CD4-positive, alpha-beta memory T cell (primary cell): ENCODE measurements at regions of chr5 and their contacts with region 1.

Region 1: DNA sequence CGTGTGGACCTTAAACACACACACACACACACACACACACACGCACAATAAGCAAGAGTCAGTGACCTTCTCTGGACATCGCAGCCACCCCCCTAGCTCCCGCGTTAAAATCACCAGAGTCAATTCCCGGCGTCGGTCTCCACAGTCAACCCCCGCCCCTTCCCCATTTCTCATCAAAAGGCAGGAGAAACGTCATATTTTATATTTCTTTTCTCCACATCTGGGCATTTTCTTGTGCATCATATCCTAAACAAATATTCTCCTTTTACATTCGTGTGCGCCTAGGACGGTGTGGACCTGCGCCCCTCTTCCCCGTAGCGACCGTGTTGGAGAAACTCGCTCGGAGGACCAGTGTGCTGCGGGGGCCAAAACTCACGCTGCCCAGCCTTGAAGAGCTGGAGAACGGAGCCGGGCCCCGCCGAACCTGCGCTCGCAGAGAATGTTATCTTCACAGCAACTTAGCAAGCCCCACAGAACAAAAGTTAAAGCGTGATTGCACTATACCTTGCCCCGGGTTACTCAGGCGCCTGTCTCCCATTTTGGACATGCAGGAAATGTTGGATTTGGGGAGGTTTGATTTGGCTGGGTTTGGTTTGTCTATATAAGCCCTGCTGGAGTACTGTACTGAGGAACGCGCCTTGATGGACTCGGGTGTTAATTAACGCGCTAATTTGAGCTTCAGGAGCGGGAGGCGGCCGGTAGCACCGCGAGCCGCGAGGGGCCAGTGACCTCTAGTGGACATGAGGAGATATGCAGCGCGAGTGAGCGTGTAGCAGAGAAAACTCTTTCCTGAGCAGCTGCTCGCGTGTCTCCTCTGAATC is 192.4 kb downstream of the MEF2C start:
- DNase-seq: peak; percentile 54 to 73 (median 69)
- H3K4me3 ChIP-seq: no peak overlapping the region
- H3K4me3 Mint-ChIP-seq: peak overlapping the region; percentile 43 to 87 (median 73)
- H3K27ac ChIP-seq: no peak overlapping the region
- H3K27ac Mint-ChIP-seq: peak overlapping the region in 5 of 7 donors; percentile 40 to 93 (median 77)
- H3K4me1 ChIP-seq: peaks cover 12% of the 10 kb centered on the region
- H3K4me1 Mint-ChIP-seq: peaks cover 6 to 30% (median 10%) of the 10 kb centered on the region in 4 donors
- H3K27me3 ChIP-seq: peaks cover 85% of the 10 kb centered on the region
- H3K27me3 Mint-ChIP-seq: peaks cover 74 to 83% of the 10 kb centered on the region in 2 donors

Region 2: DNA sequence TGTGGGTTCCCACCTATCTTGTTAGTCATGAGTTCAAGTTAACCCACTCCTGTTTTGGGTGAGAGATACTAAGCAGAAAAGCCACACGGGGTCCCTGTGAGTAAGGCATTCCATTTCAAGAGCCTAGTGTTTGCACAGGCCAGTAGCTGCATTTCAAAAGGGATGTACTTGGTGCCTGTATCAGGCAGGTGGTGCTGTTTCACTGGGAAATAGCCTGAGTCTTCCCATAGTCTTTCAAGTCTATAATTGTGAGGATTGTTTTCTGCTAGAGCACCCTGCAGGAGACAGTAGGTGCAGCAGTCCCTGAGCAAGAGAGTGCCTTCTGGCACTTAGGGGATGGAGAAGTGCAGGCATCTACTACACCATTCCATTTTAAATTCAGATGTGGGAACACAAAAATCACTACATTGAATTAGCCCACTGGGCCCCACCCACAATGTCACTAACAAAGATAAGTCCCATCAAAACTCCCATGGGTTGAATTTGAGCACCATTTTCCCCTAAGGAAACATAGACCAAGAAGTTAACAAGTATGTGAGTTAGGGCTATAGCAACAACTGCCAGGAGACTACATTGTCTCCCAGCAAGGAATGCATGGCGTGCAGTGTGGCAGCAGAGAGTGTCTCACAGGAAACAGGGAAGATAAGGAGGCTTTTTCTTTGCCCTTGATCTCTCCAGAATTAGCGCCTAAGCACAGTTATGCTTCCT is 1809.7 kb before region 1 on chr5:
- CTCF ChIA-PET with region 1: interaction called, 6 read pairs
- POLR2A ChIA-PET with region 1: no interaction called
- intact Hi-C with region 1: loop called (anchors 2 kb)
- DNase-seq: peak; percentile 37 to 50 (median 45)
- H3K4me3 ChIP-seq: no peak overlapping the region
- H3K4me3 Mint-ChIP-seq: no peak overlapping the region
- H3K27ac ChIP-seq: no peak overlapping the region
- H3K27ac Mint-ChIP-seq: peak overlapping the region in 1 of 7 donors; percentile 13
- H3K4me1 ChIP-seq: no peaks in the 10 kb centered on the region
- H3K4me1 Mint-ChIP-seq: peaks cover 0 to 1% (median 0%) of the 10 kb centered on the region in 4 donors
- H3K27me3 ChIP-seq: no peaks in the 10 kb centered on the region
- H3K27me3 Mint-ChIP-seq: no peaks in the 10 kb centered on the region

Region 3: GRCh38 chr5:87780831-87781760 is 909.5 kb before region 1 on chr5:
- CTCF ChIA-PET with region 1: interaction called, 133 read pairs
- POLR2A ChIA-PET with region 1: no interaction called
- intact Hi-C with region 1: loop called (anchors 1 kb)
- DNase-seq: peak; percentile 67 to 76 (median 72)
- H3K4me3 ChIP-seq: no peak overlapping the region
- H3K4me3 Mint-ChIP-seq: no peak overlapping the region
- H3K27ac ChIP-seq: no peak overlapping the region
- H3K27ac Mint-ChIP-seq: no peak overlapping the region
- H3K4me1 ChIP-seq: no peaks in the 10 kb centered on the region
- H3K4me1 Mint-ChIP-seq: peaks cover 0 to 2% (median under 1%) of the 10 kb centered on the region in 4 donors
- H3K27me3 ChIP-seq: peaks cover 7% of the 10 kb centered on the region
- H3K27me3 Mint-ChIP-seq: peaks cover 8 to 15% of the 10 kb centered on the region in 2 donors

Region 4: DNA sequence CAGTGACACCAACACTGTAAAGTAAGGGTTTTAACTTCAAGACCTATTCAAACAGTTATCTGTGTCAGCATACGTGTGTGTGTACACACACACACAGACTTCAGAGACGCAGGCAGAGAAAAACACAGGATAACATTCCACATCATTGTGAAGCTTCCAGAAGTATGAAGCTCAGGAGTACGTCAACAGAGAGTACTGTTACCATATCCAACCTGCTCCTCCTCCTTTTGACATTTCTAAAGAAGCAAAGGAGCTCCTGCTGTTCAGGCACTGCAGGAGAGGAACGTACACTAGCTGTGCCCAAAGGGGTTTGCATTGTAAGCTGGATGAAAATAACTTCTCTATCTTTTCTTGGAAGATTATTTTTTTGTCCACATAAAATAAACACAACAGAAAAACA is 11.7 kb after region 1 on chr5:
- CTCF ChIA-PET with region 1: interaction called, 15 read pairs
- POLR2A ChIA-PET with region 1: no interaction called
- intact Hi-C with region 1: no loop called
- DNase-seq: no peak
- H3K4me3 ChIP-seq: no peak overlapping the region
- H3K4me3 Mint-ChIP-seq: no peak overlapping the region
- H3K27ac ChIP-seq: no peak overlapping the region
- H3K27ac Mint-ChIP-seq: no peak overlapping the region
- H3K4me1 ChIP-seq: no peaks in the 10 kb centered on the region
- H3K4me1 Mint-ChIP-seq: no peaks in the 10 kb centered on the region
- H3K27me3 ChIP-seq: peaks cover 3% of the 10 kb centered on the region
- H3K27me3 Mint-ChIP-seq: peaks cover 24 to 31% of the 10 kb centered on the region in 2 donors

Region 5: DNA sequence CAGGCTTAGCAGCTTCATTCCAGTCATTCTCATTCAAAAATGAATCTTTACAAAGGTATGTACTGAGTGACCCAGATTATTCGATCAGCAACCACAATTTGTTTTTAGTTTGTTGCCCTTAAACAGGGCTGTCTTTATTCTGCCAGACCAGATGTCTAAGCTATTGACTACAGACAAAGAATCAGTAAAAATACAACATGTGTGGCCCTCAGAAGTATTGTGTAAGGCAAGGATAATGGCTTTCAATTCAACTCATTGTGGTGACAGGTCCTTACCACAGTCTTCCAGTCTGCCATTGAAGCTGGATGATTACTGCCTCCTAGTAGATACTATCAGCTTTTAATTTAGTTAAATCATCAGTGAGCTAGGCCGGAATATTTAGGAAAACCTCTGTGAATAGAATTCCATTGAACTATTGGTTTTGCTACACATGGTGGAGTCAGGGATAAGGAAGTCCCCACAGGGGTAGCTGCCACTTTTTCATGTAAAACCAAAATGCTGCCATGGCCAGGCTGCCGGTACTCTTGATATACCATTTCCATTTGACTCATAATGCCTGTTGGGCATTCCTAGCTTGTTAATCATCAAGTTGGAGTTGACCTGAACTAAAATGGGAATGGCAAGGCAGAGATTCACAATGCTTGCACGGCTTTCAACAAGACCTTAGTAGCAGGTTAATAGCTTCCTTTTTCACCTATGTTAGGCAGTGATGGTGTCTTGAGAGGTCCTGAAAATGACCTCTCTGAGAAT is 16.8 kb after region 1 on chr5:
- CTCF ChIA-PET with region 1: interaction called, 15 read pairs
- POLR2A ChIA-PET with region 1: no interaction called
- intact Hi-C with region 1: no loop called
- DNase-seq: no peak
- H3K4me3 ChIP-seq: no peak overlapping the region
- H3K4me3 Mint-ChIP-seq: no peak overlapping the region
- H3K27ac ChIP-seq: no peak overlapping the region
- H3K27ac Mint-ChIP-seq: no peak overlapping the region
- H3K4me1 ChIP-seq: no peaks in the 10 kb centered on the region
- H3K4me1 Mint-ChIP-seq: no peaks in the 10 kb centered on the region
- H3K27me3 ChIP-seq: no peaks in the 10 kb centered on the region
- H3K27me3 Mint-ChIP-seq: peaks cover 6 to 16% of the 10 kb centered on the region in 2 donors